Right ventricle myocardium superior (tissue), 1 donor: ENCODE measurements at regions of chr1 and their contacts with region 1.

Region 1: GRCh38 chr1:84936116-84936810 is 43.3 kb upstream of the LPAR3 start:
- DNase-seq: no peak
- ATAC-seq: peak; percentile 88

Region 2: GRCh38 chr1:84442256-84442655 is 494.0 kb before region 1 on chr1:
- intact Hi-C with region 1: loop called (anchors 10 kb)
- DNase-seq: no peak
- ATAC-seq: peak; percentile 92

Region 3: GRCh38 chr1:84772428-84772943 is 163.8 kb before region 1 on chr1:
- intact Hi-C with region 1: loop called (anchors 10 kb)
- DNase-seq: peak; percentile 68
- ATAC-seq: peak; percentile 94

Region 4: GRCh38 chr1:85048296-85049064 is 112.2 kb after region 1 on chr1 and contains the start of gene MCOLN3:
- intact Hi-C with region 1: no loop called
- DNase-seq: peak; percentile 47
- ATAC-seq: peak; percentile 66
- total RNA-seq, gene MCOLN3: 1.7 TPM